Activated naive CD4-positive, alpha-beta T cell treated with anti-CD3 and anti-CD28 coated beads, Interleukin-2, amount 10 ng/mL, durations not matched to agents 7 days and 5 days (primary cell): ENCODE measurements at regions of chr1 and their contacts with region 1.

Region 1: GRCh38 chr1:110780600-110781484 is 92.1 kb upstream of the CD53 start:
- DNase-seq: peak; percentile 83
- H3K4me3 Mint-ChIP-seq: no peak overlapping the region
- H3K27ac Mint-ChIP-seq: peak overlapping the region; percentile 26
- H3K4me1 Mint-ChIP-seq: peaks cover 41% of the 10 kb centered on the region
- H3K27me3 Mint-ChIP-seq: peaks cover 41% of the 10 kb centered on the region

Region 2: GRCh38 chr1:110524311-110525251 is 256.3 kb before region 1 on chr1:
- CTCF ChIA-PET with region 1: interaction called, 137 read pairs
- DNase-seq: peak; percentile 69
- H3K4me3 Mint-ChIP-seq: no peak overlapping the region
- H3K27ac Mint-ChIP-seq: no peak overlapping the region
- H3K4me1 Mint-ChIP-seq: no peaks in the 10 kb centered on the region
- H3K27me3 Mint-ChIP-seq: peaks cover 79% of the 10 kb centered on the region

Region 3: GRCh38 chr1:110605901-110606656 is 174.8 kb before region 1 on chr1 and contains the start of gene KCNA2:
- CTCF ChIA-PET with region 1: interaction called, 12 read pairs
- DNase-seq: peak; percentile 43
- H3K4me3 Mint-ChIP-seq: peak within 1 kb of the TSS; percentile 69
- H3K27ac Mint-ChIP-seq: peak within 1 kb of the TSS; percentile 73
- H3K4me1 Mint-ChIP-seq: peaks cover 32% of the 10 kb centered on the region
- H3K27me3 Mint-ChIP-seq: peaks cover 73% of the 10 kb centered on the region

Region 4: GRCh38 chr1:110630839-110631663 is 149.8 kb before region 1 on chr1:
- CTCF ChIA-PET with region 1: interaction called, 14 read pairs
- DNase-seq: peak; percentile 91
- H3K4me3 Mint-ChIP-seq: no peak overlapping the region
- H3K27ac Mint-ChIP-seq: no peak overlapping the region
- H3K4me1 Mint-ChIP-seq: peaks cover 35% of the 10 kb centered on the region
- H3K27me3 Mint-ChIP-seq: no peaks in the 10 kb centered on the region

Region 5: GRCh38 chr1:110850636-110851035 is 69.8 kb after region 1 on chr1:
- CTCF ChIA-PET with region 1: no interaction called
- DNase-seq: no peak
- H3K4me3 Mint-ChIP-seq: no peak overlapping the region
- H3K27ac Mint-ChIP-seq: no peak overlapping the region
- H3K4me1 Mint-ChIP-seq: peaks cover 12% of the 10 kb centered on the region
- H3K27me3 Mint-ChIP-seq: peaks cover 19% of the 10 kb centered on the region

Region 6: GRCh38 chr1:110872745-110873720 is 92.2 kb after region 1 on chr1 and contains the start of gene CD53:
- CTCF ChIA-PET with region 1: interaction called, 11 read pairs
- DNase-seq: peak; percentile 67
- H3K4me3 Mint-ChIP-seq: peak within 1 kb of the TSS; percentile 93
- H3K27ac Mint-ChIP-seq: peak within 1 kb of the TSS; percentile 98
- H3K4me1 Mint-ChIP-seq: peaks cover 41% of the 10 kb centered on the region
- H3K27me3 Mint-ChIP-seq: no peaks in the 10 kb centered on the region